ENCODE measurements at regions of chr9 and their contacts with region 1.

Region 1: DNA sequence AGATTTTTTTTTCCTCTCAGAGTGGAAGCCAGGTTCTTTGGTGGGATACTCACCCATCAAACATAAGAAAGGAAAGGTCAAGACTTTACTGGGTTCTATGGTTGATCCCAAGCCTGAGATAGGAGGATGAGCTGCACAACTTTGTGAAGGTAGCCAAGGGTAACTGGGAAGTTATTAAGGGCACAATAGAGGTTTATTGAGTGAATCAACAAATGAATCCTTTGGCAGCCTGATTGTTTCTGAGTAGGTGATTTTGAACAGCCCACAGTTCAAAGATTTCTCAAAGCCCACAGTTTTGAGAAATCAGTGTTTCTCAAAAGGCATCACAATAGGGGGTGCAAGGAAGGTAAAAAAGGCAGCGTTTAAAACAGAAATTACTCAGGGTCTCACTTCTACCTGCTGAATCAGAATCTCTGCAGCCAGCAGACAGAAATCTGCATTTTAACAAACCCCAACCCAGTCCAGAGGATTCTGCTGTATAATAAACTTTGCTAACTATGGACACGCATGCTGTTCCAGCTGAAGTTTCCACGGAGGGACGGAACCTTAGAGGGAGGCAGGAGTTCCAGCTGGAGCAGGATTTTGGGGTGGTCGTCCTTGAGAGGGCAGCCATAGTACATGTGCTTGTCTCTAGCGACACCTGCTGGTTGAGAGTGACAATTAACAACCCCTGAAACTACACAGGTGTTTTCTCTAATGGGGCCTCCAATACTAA is 32.7 kb upstream of the FSD1L start:
- DNase-seq: peak; percentile 28 to 82 (median 64)
- ATAC-seq: peak; percentile 85
- H3K4me3 ChIP-seq: no peak overlapping the region
- H3K4me3 Mint-ChIP-seq: no peak overlapping the region
- H3K27ac ChIP-seq: no peak overlapping the region
- H3K27ac Mint-ChIP-seq: no peak overlapping the region
- H3K4me1 ChIP-seq: peaks cover 2% of the 10 kb centered on the region
- H3K4me1 Mint-ChIP-seq: peaks cover 6% of the 10 kb centered on the region
- H3K27me3 ChIP-seq: peaks cover 4 to 6% of the 10 kb centered on the region in 2 experiments
- H3K27me3 Mint-ChIP-seq: peaks cover 33% of the 10 kb centered on the region
- CTCF ChIP-seq: peak; percentile 87

Region 2: DNA sequence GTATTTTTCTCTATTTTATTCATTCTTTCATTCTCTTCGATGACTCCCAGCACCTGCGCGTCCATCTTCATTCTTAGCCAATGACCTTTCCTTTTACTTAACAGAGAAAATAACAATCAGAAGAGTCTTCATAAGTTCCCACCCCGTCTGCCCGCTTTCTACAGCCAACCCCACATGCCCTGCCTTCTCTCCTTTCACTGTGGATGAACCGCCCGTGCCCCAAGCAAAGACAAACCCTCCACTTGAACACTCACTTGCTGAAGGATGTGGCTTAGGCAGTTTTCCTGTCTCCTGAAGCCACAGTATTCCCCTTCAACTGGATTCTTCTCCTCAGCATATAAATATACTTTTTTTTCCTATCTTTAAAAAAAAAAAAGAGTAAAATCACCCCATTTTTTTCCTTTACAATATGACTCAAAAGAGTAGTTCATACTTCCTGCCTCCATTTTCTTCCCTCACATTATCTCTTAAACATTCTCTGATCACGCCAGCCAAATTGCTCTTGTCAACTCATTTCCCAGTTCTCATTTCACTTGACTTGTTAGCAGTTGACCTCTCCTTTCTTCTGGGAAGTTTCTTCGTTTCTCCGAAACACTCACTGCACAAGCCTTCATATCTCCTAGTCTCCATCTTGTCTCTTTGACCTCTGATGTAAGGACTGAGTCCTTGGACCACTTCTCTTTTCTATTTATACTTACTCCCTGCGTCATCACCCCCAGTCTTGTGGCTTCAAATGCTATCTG is 640.1 kb before region 1 on chr9:
- CTCF ChIA-PET with region 1: no interaction called
- POLR2A ChIA-PET with region 1: no interaction called
- intact Hi-C with region 1: loop called in 1 of 2 experiments (anchors 5 kb)
- DNase-seq: peak in 1 of 9 experiments; percentile 26
- ATAC-seq: no peak
- H3K4me3 ChIP-seq: no peak overlapping the region
- H3K4me3 Mint-ChIP-seq: no peak overlapping the region
- H3K27ac ChIP-seq: no peak overlapping the region
- H3K27ac Mint-ChIP-seq: no peak overlapping the region
- H3K4me1 ChIP-seq: no peaks in the 10 kb centered on the region
- H3K4me1 Mint-ChIP-seq: no peaks in the 10 kb centered on the region
- H3K27me3 ChIP-seq: no peaks in the 10 kb centered on the region
- H3K27me3 Mint-ChIP-seq: no peaks in the 10 kb centered on the region
- CTCF ChIP-seq: no peak

Region 3: GRCh38 chr9:104863180-104863883 is 551.8 kb before region 1 on chr9:
- CTCF ChIA-PET with region 1: interaction called, 68 read pairs
- POLR2A ChIA-PET with region 1: no interaction called
- intact Hi-C with region 1: loop called (anchors 1 kb)
- DNase-seq: peak; percentile 9 to 73 (median 41)
- ATAC-seq: peak; percentile 91
- H3K4me3 ChIP-seq: no peak overlapping the region
- H3K4me3 Mint-ChIP-seq: no peak overlapping the region
- H3K27ac ChIP-seq: no peak overlapping the region
- H3K27ac Mint-ChIP-seq: no peak overlapping the region
- H3K4me1 ChIP-seq: no peaks in the 10 kb centered on the region
- H3K4me1 Mint-ChIP-seq: peaks cover 4% of the 10 kb centered on the region
- H3K27me3 ChIP-seq: no peaks in the 10 kb centered on the region
- H3K27me3 Mint-ChIP-seq: peaks cover 4% of the 10 kb centered on the region
- CTCF ChIP-seq: peak; percentile 82

Region 4: DNA sequence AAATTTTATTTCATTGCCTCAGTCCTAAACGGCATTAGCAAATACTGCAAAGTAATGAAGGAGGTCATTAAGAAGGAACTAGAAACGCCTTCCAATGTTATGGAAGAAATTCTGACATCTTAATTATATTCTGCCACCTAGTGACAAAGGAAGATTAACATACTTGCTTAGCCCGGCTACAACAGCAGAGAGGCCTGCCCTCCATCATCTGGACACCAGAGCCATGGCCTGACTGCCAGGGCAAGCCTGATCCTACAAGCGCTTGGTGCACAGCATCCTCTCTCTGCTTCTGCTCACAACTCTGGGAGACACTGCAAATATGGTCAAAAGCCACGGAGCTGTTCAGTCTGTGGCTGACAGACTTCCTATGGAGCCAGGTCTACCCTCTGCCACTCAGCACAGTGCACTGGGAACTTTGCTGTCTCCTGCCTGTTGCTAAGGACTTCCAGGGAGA is 257.9 kb before region 1 on chr9:
- CTCF ChIA-PET with region 1: interaction called, 13 read pairs
- POLR2A ChIA-PET with region 1: no interaction called
- intact Hi-C with region 1: loop called (anchors 1 kb)
- DNase-seq: peak in 5 of 9 experiments; percentile 1 to 58 (median 41)
- ATAC-seq: peak; percentile 55
- H3K4me3 ChIP-seq: no peak overlapping the region
- H3K4me3 Mint-ChIP-seq: no peak overlapping the region
- H3K27ac ChIP-seq: no peak overlapping the region
- H3K27ac Mint-ChIP-seq: no peak overlapping the region
- H3K4me1 ChIP-seq: peaks cover 5% of the 10 kb centered on the region
- H3K4me1 Mint-ChIP-seq: peaks cover 16% of the 10 kb centered on the region
- H3K27me3 ChIP-seq: peaks cover 0 to 3% of the 10 kb centered on the region in 2 experiments
- H3K27me3 Mint-ChIP-seq: no peaks in the 10 kb centered on the region
- CTCF ChIP-seq: peak; percentile 57

Region 5: DNA sequence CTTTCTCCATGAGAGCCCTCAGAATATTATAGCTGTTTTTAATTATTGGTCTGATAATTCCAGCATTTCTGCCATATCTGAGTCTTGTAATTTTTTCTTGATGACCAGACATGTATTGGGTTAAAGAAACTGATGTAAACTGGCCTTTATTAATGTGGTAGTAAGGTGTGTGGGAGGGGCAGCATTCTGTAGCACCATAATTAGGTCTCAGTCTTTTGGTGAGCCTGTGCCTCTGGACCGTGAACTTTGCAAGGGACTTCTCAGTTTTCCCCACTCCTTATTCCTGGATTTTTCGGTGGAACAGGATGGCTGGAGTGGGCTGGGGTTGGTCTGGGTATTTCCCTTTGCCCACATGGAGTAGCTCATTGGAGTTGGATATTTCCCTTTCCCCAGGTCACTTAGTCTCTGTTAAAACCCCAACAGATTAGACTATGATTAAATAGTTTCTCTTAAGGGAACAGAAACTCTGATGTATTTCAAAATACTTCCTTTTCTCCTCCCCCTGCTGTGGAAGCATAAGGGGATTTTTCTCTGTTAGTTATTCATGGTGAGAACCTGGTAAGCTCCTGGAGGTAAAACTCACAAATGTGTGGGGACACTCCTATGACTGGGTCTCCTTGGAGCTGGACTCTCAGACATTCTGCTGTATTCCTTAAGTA is 85.1 kb after region 1 on chr9:
- CTCF ChIA-PET with region 1: no interaction called
- POLR2A ChIA-PET with region 1: no interaction called
- intact Hi-C with region 1: no loop called
- DNase-seq: peak in 1 of 9 experiments; percentile 13
- ATAC-seq: no peak
- H3K4me3 ChIP-seq: no peak overlapping the region
- H3K4me3 Mint-ChIP-seq: no peak overlapping the region
- H3K27ac ChIP-seq: no peak overlapping the region
- H3K27ac Mint-ChIP-seq: no peak overlapping the region
- H3K4me1 ChIP-seq: no peaks in the 10 kb centered on the region
- H3K4me1 Mint-ChIP-seq: no peaks in the 10 kb centered on the region
- H3K27me3 ChIP-seq: no peaks in the 10 kb centered on the region
- H3K27me3 Mint-ChIP-seq: no peaks in the 10 kb centered on the region
- CTCF ChIP-seq: no peak